ENCODE measurements at regions of chr15 and their contacts with region 1.

Region 1: GRCh38 chr15:58070801-58071418 is 5.4 kb upstream of the ALDH1A2 start:
- DNase-seq: peak; percentile 42 to 84 (median 52)
- ATAC-seq: no peak
- H3K4me3 ChIP-seq: no peak overlapping the region
- H3K27ac ChIP-seq: no peak overlapping the region
- H3K4me1 ChIP-seq: peaks cover 5 to 6% of the 10 kb centered on the region in 2 experiments; a peak in 3 of 5 replicates
- H3K27me3 ChIP-seq: no peaks in the 10 kb centered on the region
- CTCF ChIP-seq: peak; percentile 86 to 94 (median 86)
- EP300 ChIP-seq: no peak
- POLR2A ChIP-seq: no peak
- RAD21 ChIP-seq: peak; percentile 89 to 93

Region 2: DNA sequence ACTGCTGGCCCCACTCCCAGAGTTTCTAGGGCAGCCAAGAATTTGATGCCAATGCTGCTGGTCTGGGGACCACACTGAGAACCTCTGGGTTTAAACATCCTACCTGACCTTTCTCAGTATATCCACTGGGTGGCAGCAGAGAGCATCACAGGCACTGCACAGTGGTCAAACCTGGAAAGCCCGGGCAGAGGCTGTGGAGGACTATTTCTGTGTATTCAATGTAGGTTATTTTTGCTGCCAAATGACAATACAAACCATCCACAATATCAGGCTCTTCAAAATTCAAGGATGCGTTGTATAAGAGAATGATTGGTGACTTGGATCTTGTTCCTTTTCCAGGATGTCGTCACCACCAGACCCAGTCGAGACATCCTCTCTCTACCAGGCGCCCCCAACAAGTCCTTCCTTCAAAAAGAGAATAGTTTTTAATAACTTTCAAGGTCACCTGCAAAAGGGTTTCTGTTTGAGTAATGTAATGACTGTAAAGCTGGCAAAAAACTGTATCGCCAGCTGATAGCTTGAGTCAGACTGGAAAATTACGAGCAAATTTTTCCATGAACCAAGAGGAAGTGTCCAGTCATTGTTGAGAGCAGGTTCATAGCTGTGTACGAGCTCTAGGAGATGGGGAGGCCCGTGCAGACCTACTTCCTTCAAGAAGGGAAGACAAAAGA is 509.7 kb before region 1 on chr15:
- CTCF ChIA-PET with region 1: interaction called, 17 read pairs
- POLR2A ChIA-PET with region 1: no interaction called
- in situ Hi-C with region 1: loop called (anchors 25 kb)
- intact Hi-C with region 1: loop called (anchors 2 kb)
- DNase-seq: peak; percentile 71 to 82 (median 76)
- ATAC-seq: peak; percentile 98
- H3K4me3 ChIP-seq: no peak overlapping the region
- H3K27ac ChIP-seq: no peak overlapping the region
- H3K4me1 ChIP-seq: no peaks in the 10 kb centered on the region; a peak in 1 of 5 replicates
- H3K27me3 ChIP-seq: peaks cover 10 to 35% of the 10 kb centered on the region in 2 experiments
- CTCF ChIP-seq: peak; percentile 83 to 93 (median 84)
- EP300 ChIP-seq: no peak
- POLR2A ChIP-seq: no peak
- RAD21 ChIP-seq: peak; percentile 56 to 78

Region 3: DNA sequence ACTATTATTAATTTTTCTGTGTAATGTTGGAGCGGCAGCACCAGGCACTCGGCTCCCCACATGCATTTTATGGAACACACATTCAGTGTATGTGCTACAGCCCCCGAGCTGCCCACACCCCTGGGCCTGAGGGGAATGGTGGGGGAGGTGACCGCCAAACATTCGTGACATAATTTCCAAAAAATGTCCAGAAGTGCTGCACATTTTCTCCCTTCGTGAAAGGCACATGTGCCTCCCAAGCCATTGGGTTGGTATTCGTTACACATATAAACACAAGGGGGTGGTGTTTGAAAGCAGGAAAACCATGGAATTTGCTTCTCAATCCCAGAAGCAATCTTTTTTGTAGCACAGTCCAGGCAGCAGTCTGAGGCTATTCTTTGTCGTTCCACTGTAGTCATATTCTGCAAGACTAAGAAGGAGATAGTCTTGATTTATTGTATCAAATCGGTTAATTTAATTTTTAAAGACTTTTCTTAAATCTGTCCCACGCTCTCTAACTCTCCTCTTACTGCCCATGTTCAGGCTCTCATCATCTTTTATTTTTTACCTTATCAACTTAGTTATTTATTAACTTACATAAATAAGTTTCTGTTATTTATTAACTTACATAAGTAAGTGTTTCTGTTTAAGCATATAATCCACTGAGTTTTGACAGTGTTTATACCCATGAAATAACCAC is 403.6 kb before region 1 on chr15:
- CTCF ChIA-PET with region 1: interaction called, 6 read pairs
- POLR2A ChIA-PET with region 1: no interaction called
- in situ Hi-C with region 1: no loop called
- intact Hi-C with region 1: loop called (anchors 10 kb)
- DNase-seq: peak in 2 of 4 experiments; percentile 9 to 12
- ATAC-seq: peak; percentile 48; the same call in 2 of the 3 replicates
- H3K4me3 ChIP-seq: no peak overlapping the region
- H3K27ac ChIP-seq: no peak overlapping the region
- H3K4me1 ChIP-seq: no peaks in the 10 kb centered on the region
- H3K27me3 ChIP-seq: peaks cover 6 to 12% of the 10 kb centered on the region in 2 experiments
- CTCF ChIP-seq: peak; percentile 32 to 51 (median 43); a peak in 4 of 6 replicates
- EP300 ChIP-seq: no peak
- POLR2A ChIP-seq: no peak
- RAD21 ChIP-seq: peak; percentile 62 to 63

Region 4: DNA sequence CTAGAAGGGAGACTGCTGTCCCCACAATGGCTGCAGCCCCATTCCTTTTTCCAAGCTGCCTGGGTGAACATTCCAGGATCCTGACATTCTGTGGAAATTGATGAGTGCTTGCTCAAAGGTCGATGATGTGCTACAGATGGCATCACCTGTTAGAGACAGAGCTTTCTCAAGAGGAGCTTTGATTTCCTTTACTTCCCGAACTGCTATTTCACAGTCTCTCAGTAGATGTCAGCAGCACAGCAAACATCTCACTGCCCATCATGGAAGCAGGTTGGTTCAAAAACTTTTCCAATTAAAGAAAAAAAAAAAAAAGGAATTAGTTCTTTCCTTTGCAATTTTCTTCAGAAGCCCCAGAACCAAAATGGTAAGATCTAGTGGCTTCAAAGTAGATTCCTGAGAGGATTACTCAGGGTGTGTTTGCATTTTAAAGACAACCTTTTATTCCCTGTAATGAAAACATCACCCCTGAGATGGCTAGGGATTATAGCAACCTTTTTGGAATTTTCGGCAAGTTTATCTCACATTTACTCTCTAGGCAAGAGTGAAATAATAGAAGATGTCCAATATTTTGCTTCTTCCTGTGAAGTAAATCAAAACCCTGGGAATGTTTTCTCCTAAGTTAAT is 319.6 kb before region 1 on chr15:
- CTCF ChIA-PET with region 1: interaction called, 3 read pairs
- POLR2A ChIA-PET with region 1: no interaction called
- in situ Hi-C with region 1: loop called (anchors 25 kb)
- intact Hi-C with region 1: loop called (anchors 5 kb)
- DNase-seq: peak in 1 of 4 experiments; percentile 23
- ATAC-seq: no peak
- H3K4me3 ChIP-seq: no peak overlapping the region
- H3K27ac ChIP-seq: no peak overlapping the region
- H3K4me1 ChIP-seq: peaks cover 0 to 2% of the 10 kb centered on the region in 2 experiments; a peak in 1 of 5 replicates
- H3K27me3 ChIP-seq: peaks cover 16 to 32% of the 10 kb centered on the region in 2 experiments; a peak in 4 of 5 replicates
- CTCF ChIP-seq: peak; percentile 28 to 56 (median 37); a peak in 2 of 6 replicates
- EP300 ChIP-seq: no peak
- POLR2A ChIP-seq: no peak
- RAD21 ChIP-seq: peak; percentile 52 to 69

Region 5: DNA sequence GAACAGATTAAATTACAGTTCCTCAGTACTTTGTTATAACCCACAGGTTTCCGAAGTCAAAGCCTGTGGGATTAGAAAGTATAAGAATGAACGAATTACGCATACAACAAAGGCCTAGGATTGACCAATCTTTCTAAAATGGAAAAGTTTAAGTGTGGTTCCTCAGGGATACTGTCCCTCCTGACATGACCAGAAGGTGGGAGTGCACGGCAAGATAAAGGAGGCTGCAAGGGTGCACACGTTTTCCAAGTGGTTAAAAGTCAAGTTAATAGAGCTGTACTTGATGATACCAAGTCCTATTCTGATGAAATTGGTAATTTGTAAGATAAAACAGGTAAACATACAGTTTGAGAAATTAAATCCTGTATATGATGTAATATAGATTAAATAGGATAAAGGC is 101.6 kb before region 1 on chr15:
- CTCF ChIA-PET with region 1: interaction called, 5 read pairs
- POLR2A ChIA-PET with region 1: interaction called, 3 read pairs
- in situ Hi-C with region 1: no loop called
- intact Hi-C with region 1: loop called (anchors 5 kb)
- DNase-seq: no peak
- ATAC-seq: peak; percentile 71
- H3K4me3 ChIP-seq: no peak overlapping the region
- H3K27ac ChIP-seq: no peak overlapping the region
- H3K4me1 ChIP-seq: no peaks in the 10 kb centered on the region
- H3K27me3 ChIP-seq: no peaks in the 10 kb centered on the region
- CTCF ChIP-seq: peak; percentile 37 to 48 (median 37); a peak in 4 of 6 replicates
- EP300 ChIP-seq: no peak
- POLR2A ChIP-seq: no peak
- RAD21 ChIP-seq: peak; percentile 38 to 43; a peak in 3 of 4 replicates

Measured in K562 (cell line).